Tibial artery (tissue), 4 donors: ENCODE measurements at regions of chr12 and their contacts with region 1.

Region 1: DNA sequence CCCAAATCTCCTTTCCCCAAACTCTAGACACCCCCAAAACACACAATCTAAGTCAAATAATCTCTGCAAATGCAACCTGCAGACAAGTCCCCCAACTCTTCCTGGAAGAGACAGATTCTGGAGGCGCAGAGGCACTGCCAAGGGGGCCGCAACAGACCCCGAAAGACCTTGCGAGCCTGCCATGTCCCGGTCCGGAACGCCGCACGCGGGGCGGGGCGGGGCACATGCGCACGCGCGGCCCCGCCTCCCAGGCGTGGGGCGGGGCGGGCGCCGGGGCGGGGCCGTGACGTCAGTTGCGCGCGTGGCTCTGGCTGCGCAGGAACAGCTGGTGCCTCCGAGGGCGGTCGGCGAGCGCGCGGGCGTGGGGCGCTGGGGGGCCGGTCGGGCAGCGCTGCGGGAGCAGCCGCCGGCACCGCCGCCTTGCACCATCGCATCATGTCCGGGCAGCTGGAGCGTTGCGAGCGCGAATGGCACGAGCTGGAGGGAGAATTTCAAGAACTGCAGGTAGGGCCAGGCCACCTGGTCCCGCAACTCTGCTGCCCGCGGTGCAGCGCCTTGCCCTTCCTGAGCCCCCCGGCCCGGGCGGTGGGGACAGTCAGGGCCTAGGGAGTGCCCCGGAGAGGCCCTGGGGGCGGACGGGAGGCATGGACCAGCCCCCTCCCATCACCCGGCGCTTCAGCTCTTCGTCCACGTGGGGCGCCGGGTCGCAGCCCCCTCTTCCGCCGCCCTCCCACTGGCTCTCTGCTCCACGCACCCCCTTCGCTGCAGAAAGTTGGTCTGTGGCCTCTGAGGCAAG is at the start of gene TMEM120B:
- DNase-seq: peak; percentile 67 to 93
- H3K4me3 ChIP-seq: peak within 1 kb of the TSS; percentile 69 to 98
- H3K27ac ChIP-seq: peak within 1 kb of the TSS; percentile 76
- H3K4me1 ChIP-seq: peaks cover 0 to 19% (median 16%) of the 10 kb centered on the region in 4 donors
- H3K27me3 ChIP-seq: no peaks in the 10 kb centered on the region
- CTCF ChIP-seq: peak in 1 of 2 experiments; percentile 7

Region 2: DNA sequence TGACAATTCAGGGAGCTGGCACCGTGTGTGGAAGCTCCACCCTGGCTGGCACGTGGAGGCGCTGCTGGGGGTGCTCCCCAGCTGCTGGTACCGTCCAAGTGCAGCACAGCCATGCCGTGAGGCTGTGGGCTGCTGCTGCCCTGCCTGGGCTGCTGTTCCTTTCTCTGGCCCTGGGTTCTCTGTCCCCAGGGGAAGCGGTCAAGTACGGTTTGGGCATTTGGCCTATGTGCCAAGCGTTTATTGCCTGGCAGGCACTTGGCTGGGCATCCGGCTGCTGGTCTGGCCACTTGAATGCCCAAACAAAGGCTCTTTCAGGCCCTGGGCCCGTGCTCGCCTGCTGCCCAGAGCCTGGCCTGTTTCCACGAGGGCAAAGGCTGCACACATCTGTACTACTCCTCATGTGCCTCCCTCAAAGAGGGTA is 41.2 kb after region 1 on chr12:
- intact Hi-C with region 1: loop called (anchors 5 kb)
- DNase-seq: peak; percentile 42 to 91
- H3K4me3 ChIP-seq: no peak overlapping the region
- H3K27ac ChIP-seq: peak overlapping the region in 1 of 2 donors; percentile 46
- H3K4me1 ChIP-seq: peaks cover 0 to 16% (median 11%) of the 10 kb centered on the region in 4 donors
- H3K27me3 ChIP-seq: no peaks in the 10 kb centered on the region
- CTCF ChIP-seq: no peak

Region 3: GRCh38 chr12:122040579-122041386 is 328.1 kb after region 1 on chr12:
- intact Hi-C with region 1: no loop called
- DNase-seq: no peak
- H3K4me3 ChIP-seq: no peak overlapping the region
- H3K27ac ChIP-seq: no peak overlapping the region
- H3K4me1 ChIP-seq: peaks cover 0 to 1% (median under 1%) of the 10 kb centered on the region in 4 donors
- H3K27me3 ChIP-seq: no peaks in the 10 kb centered on the region
- CTCF ChIP-seq: no peak